ENCODE measurements at regions of chr12 and their contacts with region 1.

Region 1: GRCh38 chr12:13534645-13535398 is 338.3 kb downstream of the EMP1 start:
- DNase-seq: peak; percentile 41 to 79
- ATAC-seq: no peak

Region 2: DNA sequence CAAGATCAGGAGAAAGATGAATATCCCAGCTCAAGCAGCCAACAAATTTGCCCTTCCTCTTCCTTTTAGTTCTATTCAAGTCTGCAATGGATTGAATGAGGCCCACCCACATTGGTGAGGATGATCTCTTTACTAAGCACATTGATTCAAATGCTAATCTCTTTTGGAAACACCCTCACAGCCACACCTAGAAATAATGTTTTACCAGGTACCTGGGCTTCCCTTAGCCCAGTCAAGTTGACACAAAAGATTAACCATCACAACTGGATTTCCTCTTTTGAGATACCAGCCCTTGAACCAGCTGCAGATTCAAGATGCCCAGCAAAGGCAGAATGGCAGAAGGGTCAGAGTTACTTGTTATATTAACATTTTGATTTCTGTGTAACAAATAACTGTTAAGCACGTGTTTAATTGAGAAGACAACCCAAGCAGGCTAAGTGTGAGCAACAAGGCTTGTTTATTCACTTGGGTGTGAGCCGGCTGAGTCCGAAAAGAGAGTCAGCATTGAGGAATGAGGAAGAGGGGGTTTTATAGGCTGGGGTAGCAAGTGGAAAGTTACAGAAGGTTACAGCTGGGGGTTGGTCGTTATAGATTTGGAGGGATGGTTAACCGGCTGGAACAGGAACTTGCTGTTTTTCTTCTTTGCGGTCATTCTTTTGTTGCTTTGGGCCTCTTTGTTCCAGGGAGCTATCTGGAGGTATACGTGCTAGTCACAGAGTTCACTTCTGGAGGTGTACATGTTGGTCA is 158.0 kb before region 1 on chr12:
- intact Hi-C with region 1: loop called in 1 of 2 experiments (anchors 5 kb)
- DNase-seq: peak in 1 of 2 donors; percentile 78
- ATAC-seq: peak; percentile 81

Region 3: DNA sequence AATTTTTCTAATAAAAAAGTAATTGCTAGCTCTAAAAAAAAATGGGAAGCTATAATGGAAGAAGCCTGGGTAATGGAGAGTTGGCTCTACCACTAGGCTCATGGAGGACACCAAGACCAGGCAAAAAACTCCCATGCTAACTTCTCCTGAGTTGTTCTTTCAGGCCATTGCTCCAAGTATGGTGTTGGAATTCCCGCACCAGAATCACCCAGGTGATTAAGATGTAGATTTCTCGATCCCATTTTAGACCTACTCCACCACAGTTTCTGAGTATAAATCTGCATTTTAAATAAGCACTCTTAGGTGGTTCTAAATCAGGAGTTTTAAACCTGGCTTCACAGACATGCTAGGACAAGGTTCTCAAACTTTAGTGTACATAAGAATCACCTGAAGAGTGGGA is 117.3 kb before region 1 on chr12:
- intact Hi-C with region 1: no loop called
- DNase-seq: no peak
- ATAC-seq: no peak

Region 4: GRCh38 chr12:13652105-13652504 is 117.3 kb after region 1 on chr12:
- intact Hi-C with region 1: no loop called
- DNase-seq: no peak
- ATAC-seq: no peak